ENCODE measurements at regions of chr10 and their contacts with region 1.

Region 1: GRCh38 chr10:6401562-6402348 is 178.3 kb downstream of the PRKCQ start:
- DNase-seq: peak; percentile 52
- H3K4me3 Mint-ChIP-seq: peak overlapping the region; percentile 0
- H3K27ac Mint-ChIP-seq: no peak overlapping the region
- H3K4me1 Mint-ChIP-seq: peaks cover 25% of the 10 kb centered on the region
- H3K27me3 Mint-ChIP-seq: peaks cover 4% of the 10 kb centered on the region

Region 2: GRCh38 chr10:4825851-4826665 is 1575.7 kb before region 1 on chr10 and contains the start of gene AKR1E2:
- intact Hi-C with region 1: loop called (anchors 10 kb)
- DNase-seq: peak; percentile 82
- H3K4me3 Mint-ChIP-seq: peak within 1 kb of the TSS; percentile 82
- H3K27ac Mint-ChIP-seq: peak within 1 kb of the TSS; percentile 69
- H3K4me1 Mint-ChIP-seq: peaks cover 21% of the 10 kb centered on the region
- H3K27me3 Mint-ChIP-seq: peaks cover 45% of the 10 kb centered on the region
- total RNA-seq, gene AKR1E2: 6.2 and 6.6 TPM in 2 replicates

Region 3: DNA sequence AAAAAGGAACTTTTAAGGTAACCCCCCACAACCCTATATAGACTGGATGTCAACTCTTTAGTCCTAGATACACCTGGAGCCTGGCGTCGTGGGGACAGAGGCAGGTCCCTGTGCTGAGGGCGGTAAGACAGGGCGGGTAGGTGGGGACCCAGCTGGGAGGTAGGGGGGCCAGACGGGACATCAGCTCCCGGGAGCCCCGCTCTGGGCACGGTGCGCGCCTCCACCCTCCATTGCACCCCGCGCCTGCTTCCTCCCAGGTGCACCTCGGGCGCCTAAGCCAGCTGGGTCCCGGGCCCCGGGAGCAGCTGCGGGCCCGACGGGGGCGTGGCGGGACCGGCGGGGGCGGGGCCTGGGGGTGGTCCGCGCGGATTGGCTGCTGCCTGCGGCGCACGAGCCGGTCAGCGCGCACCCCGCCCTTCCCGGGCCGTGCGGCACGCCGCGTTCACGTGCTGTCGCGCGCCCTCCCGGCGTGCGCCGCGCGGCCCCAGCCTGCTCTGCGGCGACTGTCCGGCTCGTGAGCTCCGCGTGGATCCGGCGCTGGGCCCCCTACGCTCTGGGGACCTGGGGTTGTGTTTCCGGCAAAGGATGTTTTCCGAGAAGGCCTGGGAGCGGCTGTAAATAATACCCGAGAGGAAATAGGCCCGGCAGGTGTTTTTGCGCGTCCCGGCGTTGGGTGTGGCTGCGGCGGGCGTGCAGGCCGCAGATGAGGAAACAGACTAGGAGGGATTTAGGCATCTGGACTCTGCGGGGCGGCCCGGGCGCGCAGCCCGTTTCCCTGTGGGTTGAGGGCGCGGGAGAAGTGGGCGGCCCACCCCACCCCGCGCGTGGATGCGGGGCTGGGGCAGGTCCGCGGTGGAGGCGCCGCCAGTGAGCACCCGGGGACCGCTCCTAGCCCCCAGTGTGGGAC is 238.1 kb before region 1 on chr10:
- intact Hi-C with region 1: loop called (anchors 2 kb)
- DNase-seq: peak; percentile 88
- H3K4me3 Mint-ChIP-seq: peak overlapping the region; percentile 94
- H3K27ac Mint-ChIP-seq: peak overlapping the region; percentile 95
- H3K4me1 Mint-ChIP-seq: peaks cover 54% of the 10 kb centered on the region
- H3K27me3 Mint-ChIP-seq: no peaks in the 10 kb centered on the region

Region 4: GRCh38 chr10:6239213-6239991 is 162.4 kb before region 1 on chr10:
- intact Hi-C with region 1: loop called (anchors 1 kb)
- DNase-seq: peak; percentile 54
- H3K4me3 Mint-ChIP-seq: no peak overlapping the region
- H3K27ac Mint-ChIP-seq: peak overlapping the region; percentile 50
- H3K4me1 Mint-ChIP-seq: peaks cover 24% of the 10 kb centered on the region
- H3K27me3 Mint-ChIP-seq: no peaks in the 10 kb centered on the region

Region 5: GRCh38 chr10:6275022-6275997 is 126.4 kb before region 1 on chr10:
- intact Hi-C with region 1: loop called (anchors 1 kb)
- DNase-seq: peak; percentile 86
- H3K4me3 Mint-ChIP-seq: peak overlapping the region; percentile 77
- H3K27ac Mint-ChIP-seq: peak overlapping the region; percentile 97
- H3K4me1 Mint-ChIP-seq: peaks cover 78% of the 10 kb centered on the region
- H3K27me3 Mint-ChIP-seq: no peaks in the 10 kb centered on the region

Region 6: DNA sequence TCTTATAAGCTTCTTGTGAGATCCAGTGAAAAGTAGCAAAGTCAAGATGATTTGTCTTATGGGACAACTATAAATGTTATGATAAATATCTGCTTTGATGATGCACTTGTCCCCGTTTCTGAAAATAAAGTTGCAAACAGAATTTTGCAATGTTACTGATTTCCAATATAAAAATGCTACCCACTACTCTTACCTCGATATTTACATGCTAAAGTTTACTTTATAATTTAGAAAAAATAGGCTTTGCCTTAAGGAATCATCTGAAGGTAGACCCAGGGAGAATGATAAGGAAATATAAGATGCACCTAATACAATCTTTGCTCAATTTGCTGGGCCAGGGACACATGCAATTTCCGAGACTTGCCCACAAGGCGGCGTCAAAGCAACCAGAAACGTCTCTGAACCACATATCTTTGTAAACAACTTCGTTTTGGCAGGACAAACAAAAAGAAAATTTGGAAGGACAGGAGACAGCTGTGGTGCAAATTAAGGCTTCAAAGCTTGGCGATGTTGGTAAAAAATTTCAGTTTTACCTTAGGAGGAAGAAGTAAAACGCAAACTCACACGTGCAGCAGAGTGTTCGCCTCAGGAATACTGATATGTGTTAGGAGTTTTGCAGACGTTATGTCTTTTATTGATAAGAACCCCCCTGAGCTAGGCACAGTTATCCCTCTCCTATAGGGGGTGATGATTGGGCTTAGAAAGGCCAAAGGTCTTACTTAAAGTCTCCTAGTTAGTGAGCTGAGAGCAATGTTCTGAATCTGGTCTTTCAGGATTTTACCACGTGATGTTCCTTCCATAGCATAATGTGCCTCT is 44.0 kb after region 1 on chr10:
- intact Hi-C with region 1: no loop called
- DNase-seq: peak; percentile 30
- H3K4me3 Mint-ChIP-seq: no peak overlapping the region
- H3K27ac Mint-ChIP-seq: peak overlapping the region; percentile 36
- H3K4me1 Mint-ChIP-seq: peaks cover 34% of the 10 kb centered on the region
- H3K27me3 Mint-ChIP-seq: no peaks in the 10 kb centered on the region

Region 7: DNA sequence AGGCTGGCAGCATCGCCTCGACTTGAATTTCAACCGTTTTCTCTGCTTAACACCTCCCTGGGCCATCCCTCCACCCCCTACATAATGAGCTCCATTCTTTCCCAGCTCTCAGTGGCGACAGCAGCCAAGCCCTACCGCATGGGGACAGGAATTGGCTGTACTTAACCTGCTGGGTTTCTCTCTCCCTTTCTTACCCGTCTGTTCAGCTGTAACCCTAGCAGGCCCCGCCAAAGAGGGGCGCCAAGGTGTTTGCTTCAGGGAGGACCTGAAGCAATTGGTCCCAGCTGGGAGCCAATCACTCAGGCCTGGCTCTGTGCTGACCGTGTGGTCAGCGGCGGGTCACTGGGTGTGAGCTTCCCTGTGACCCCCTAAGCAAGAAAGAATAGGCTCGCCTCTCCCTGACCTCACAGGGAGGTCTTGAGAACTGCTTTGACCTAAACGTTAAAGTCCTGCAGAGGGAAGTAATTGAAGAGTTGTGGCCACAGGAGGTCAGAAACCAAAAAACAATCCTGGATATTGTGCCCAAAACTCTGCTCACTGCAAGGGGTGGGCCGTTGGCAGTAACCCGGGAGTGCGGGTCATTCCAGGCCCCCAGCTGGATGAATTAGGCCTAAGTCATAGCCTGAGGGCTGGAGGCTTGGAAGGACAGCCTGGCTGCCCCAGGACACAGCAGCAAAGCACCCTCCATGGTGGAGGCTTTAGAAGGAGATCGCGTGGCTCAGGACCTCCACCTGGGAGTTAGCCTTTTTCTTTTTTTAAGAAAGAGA is 1150.4 kb after region 1 on chr10:
- intact Hi-C with region 1: no loop called
- DNase-seq: no peak
- H3K4me3 Mint-ChIP-seq: no peak overlapping the region
- H3K27ac Mint-ChIP-seq: no peak overlapping the region
- H3K4me1 Mint-ChIP-seq: no peaks in the 10 kb centered on the region
- H3K27me3 Mint-ChIP-seq: peaks cover 6% of the 10 kb centered on the region